ENCODE measurements at regions of chr12 and their contacts with region 1.

Region 1: DNA sequence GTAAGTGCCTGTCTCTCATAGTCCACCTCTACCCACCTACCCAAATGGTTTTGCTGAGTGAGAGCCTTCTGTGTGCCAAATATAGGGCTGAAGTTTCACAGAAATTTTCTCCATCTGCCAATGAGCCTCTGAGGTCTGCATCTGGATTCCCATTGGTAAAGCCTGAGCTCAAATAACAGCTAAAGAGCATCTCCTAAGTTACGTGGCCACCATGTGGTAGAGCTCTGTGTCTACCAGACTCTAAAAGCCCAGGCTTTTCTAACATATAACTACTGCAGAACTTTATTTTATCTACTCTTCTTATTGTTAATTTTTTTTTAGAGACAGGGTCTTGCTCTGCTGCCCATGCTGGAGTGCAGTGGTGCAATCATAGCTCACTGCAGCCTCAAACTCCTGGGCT is 16.0 kb downstream of the AMDHD1 start:
- DNase-seq: no peak
- ATAC-seq: no peak
- H3K4me3 ChIP-seq: no peak overlapping the region
- H3K4me3 Mint-ChIP-seq: no peak overlapping the region
- H3K27ac ChIP-seq: no peak overlapping the region
- H3K27ac Mint-ChIP-seq: no peak overlapping the region
- H3K4me1 ChIP-seq: no peaks in the 10 kb centered on the region
- H3K4me1 Mint-ChIP-seq: no peaks in the 10 kb centered on the region
- H3K27me3 ChIP-seq: no peaks in the 10 kb centered on the region
- H3K27me3 Mint-ChIP-seq: no peaks in the 10 kb centered on the region

Region 2: DNA sequence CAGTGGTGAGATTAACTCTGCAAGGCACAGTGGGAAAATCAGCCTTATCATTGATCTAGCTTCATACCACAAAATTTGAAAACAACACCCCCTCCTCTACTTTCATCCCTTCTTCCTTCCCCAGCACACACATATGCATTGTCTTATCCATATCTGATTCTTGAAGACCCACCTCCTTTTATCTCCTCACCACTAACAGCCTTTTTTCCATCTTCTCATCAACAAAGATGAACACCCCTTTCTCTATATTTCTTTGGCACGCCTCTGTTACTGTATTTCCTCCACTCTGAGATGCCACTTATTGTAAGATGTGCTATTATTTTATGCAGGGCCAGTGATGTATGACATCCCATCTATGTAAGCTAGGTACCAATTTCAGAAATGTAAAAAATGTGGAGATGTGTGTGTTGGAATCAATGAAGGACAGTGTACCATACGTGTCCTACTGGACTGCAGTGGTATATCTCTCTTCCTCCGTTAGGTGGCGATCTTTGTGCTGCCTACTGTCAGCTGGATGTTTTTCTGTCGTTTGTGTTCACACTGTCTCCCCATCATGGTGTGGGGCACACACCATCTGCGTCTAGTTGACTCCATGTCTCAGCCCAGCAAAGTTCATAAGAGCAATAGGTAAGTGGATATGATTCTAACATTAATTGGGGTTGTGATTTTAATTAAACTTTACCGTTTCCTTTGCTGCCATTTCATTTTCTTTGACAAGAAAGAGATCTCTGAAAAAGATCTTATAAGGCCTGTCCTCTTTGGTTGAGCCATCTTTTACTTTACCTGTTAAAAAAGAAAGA is 40.7 kb before region 1 on chr12:
- CTCF ChIA-PET with region 1: interaction called in 1 of 2 experiments, 10 read pairs
- POLR2A ChIA-PET with region 1: interaction called in 1 of 2 experiments, 5 read pairs
- DNase-seq: peak in 32 of 35 experiments; percentile 1 to 75 (median 25)
- ATAC-seq: peak; percentile 86 to 97 (median 92)
- H3K4me3 ChIP-seq: no peak overlapping the region
- H3K4me3 Mint-ChIP-seq: no peak overlapping the region
- H3K27ac ChIP-seq: no peak overlapping the region
- H3K27ac Mint-ChIP-seq: no peak overlapping the region
- H3K4me1 ChIP-seq: no peaks in the 10 kb centered on the region
- H3K4me1 Mint-ChIP-seq: no peaks in the 10 kb centered on the region
- H3K27me3 ChIP-seq: peaks cover 0 to 3% of the 10 kb centered on the region in 2 experiments
- H3K27me3 Mint-ChIP-seq: peaks cover 0 to 1% of the 10 kb centered on the region in 2 donors